ENCODE measurements at regions of chr5 and their contacts with region 1.

Region 1: DNA sequence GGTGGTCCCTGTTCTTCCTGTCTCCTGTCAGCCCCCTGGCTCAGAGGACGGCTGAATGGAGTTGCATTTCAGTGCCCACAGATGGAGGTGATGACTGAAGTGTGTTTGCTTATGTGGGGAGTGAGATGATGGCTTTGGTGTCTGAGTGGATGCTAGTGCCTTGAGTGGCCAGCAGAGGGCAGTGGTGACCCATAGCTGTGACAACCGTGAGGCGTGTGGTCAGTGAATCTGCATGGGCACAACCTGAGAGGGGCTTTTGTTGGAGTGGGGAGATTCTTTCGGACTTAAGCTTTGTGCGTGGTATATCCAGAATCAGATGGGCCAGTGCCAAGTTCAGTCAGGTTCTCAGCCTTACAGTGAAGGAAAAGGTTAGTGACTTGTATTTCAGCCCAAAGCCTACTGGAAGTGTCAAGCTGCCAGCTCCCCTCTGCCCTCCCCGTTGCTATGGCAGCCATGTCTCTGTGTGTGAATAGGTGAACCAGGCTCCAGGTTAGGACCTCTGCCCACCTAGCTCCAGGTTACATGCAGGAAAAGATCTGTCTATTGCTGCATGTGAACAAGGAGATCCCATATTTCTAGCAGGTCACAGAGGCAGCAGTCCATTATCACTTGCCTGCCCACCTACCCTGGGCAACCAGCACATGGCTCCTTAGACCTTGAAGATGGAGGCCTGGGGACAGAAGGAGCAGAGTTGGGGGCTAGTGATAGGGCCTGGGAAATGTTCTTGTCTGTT is 14.7 kb upstream of the CXXC5 start:
- DNase-seq: peak; percentile 77 to 79
- ATAC-seq: peak; percentile 70 to 80
- H3K4me3 ChIP-seq: no peak overlapping the region
- H3K27ac ChIP-seq: peak overlapping the region in 1 of 2 experiments; percentile 51; a peak in 3 of 6 replicates
- H3K4me1 ChIP-seq: peaks cover 38% of the 10 kb centered on the region
- CTCF ChIP-seq: peak; percentile 95
- EP300 ChIP-seq: no peak
- POLR2A ChIP-seq: no peak
- RAD21 ChIP-seq: peak; percentile 94 to 95

Region 2: GRCh38 chr5:139177809-139178588 is 455.5 kb before region 1 on chr5:
- CTCF ChIA-PET with region 1: no interaction called
- POLR2A ChIA-PET with region 1: no interaction called
- DNase-seq: no peak
- ATAC-seq: peak; percentile 25 to 42; a peak in 2 of 6 replicates
- H3K4me3 ChIP-seq: no peak overlapping the region
- H3K27ac ChIP-seq: no peak overlapping the region
- H3K4me1 ChIP-seq: peaks cover 24% of the 10 kb centered on the region
- CTCF ChIP-seq: no peak
- EP300 ChIP-seq: no peak
- POLR2A ChIP-seq: no peak
- RAD21 ChIP-seq: no peak

Region 3: DNA sequence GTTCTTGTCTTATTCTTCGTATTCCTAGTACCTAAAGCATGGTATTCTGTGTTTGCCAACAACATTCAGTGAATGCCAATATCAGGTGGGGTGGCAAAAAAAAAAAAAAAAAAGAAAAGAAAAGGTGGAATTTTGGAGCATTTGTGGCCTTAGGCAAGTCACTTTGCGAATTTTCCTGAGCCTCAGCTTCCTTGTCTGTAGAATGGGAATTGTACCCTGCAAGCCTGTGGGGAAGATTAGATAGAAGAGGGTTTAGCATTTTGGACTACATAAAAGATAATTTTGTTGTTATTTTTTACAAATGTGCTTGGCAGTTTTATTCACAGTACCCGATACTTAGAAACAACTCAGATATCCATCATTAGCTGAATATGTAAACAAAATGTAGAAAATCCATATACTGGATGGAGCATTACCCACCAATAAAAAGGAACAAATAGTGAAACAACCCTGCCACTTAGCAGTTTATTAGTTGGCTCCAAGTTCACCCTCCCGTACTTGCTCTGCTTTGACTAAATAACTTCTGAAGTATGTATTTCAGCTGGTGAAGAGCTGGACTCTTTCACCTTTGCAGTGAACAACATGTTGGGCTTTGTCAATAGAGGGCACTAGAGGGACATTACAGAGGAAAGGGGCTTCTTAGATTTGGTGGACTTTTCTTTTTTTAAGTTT is 58.7 kb before region 1 on chr5:
- CTCF ChIA-PET with region 1: interaction called, 26 read pairs
- POLR2A ChIA-PET with region 1: interaction called, 3 read pairs
- DNase-seq: peak; percentile 44 to 46
- ATAC-seq: peak; percentile 80 to 89; a peak in 5 of 6 replicates
- H3K4me3 ChIP-seq: no peak overlapping the region
- H3K27ac ChIP-seq: no peak overlapping the region
- H3K4me1 ChIP-seq: peaks cover 29% of the 10 kb centered on the region; the same call in 2 of the 3 replicates
- CTCF ChIP-seq: peak; percentile 74
- EP300 ChIP-seq: no peak
- POLR2A ChIP-seq: no peak
- RAD21 ChIP-seq: peak; percentile 64 to 71

Region 4: GRCh38 chr5:139619861-139620260 is 13.6 kb before region 1 on chr5:
- CTCF ChIA-PET with region 1: interaction called, 40 read pairs
- POLR2A ChIA-PET with region 1: no interaction called
- DNase-seq: no peak
- ATAC-seq: no peak
- H3K4me3 ChIP-seq: no peak overlapping the region
- H3K27ac ChIP-seq: no peak overlapping the region
- H3K4me1 ChIP-seq: no peaks in the 10 kb centered on the region
- CTCF ChIP-seq: no peak
- EP300 ChIP-seq: no peak
- POLR2A ChIP-seq: no peak
- RAD21 ChIP-seq: no peak

Region 5: DNA sequence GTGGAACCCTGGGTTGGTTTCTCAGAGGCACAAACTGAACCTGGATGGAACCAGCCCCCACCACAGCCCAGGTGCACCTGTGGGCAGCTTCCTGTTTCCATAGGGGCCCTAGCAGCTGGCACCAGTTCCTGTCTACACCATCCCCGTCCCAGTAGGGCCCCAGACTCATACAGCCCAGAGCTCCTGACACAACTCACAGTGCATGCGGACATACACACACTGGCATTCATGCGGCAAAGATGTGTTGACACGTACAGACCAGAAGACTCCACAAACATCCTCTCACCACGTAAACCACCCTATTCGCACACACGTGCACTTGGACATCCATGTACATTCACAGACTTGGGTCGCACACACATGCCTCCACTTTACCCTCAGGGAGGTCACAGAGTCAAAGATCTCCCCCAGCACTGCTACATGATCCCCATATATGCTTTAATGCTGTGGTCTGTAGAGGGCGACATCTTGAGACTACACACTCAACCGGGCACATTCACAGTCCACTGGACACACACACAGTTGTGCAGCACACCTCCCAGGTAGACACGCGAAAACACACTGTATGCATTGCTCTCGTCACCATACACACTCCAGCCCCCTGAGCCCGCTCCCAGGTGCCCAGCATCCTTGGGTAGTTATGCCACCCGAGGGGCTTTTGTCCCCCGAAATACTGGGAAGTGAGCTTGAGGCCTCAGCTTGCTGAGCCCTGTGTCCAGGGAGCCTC is 37.1 kb after region 1 on chr5:
- CTCF ChIA-PET with region 1: interaction called, 16 read pairs
- POLR2A ChIA-PET with region 1: no interaction called
- DNase-seq: peak in 1 of 2 experiments; percentile 53
- ATAC-seq: peak in 1 of 2 experiments; percentile 59; a peak in 3 of 6 replicates
- H3K4me3 ChIP-seq: no peak overlapping the region
- H3K27ac ChIP-seq: peak overlapping the region in 1 of 2 experiments; percentile 51; a peak in 1 of 6 replicates
- H3K4me1 ChIP-seq: peaks cover 42% of the 10 kb centered on the region
- CTCF ChIP-seq: peak; percentile 26; the same call in 2 of the 3 replicates
- EP300 ChIP-seq: no peak
- POLR2A ChIP-seq: no peak
- RAD21 ChIP-seq: peak in 1 of 2 experiments; percentile 24; a peak in 1 of 5 replicates

Region 6: DNA sequence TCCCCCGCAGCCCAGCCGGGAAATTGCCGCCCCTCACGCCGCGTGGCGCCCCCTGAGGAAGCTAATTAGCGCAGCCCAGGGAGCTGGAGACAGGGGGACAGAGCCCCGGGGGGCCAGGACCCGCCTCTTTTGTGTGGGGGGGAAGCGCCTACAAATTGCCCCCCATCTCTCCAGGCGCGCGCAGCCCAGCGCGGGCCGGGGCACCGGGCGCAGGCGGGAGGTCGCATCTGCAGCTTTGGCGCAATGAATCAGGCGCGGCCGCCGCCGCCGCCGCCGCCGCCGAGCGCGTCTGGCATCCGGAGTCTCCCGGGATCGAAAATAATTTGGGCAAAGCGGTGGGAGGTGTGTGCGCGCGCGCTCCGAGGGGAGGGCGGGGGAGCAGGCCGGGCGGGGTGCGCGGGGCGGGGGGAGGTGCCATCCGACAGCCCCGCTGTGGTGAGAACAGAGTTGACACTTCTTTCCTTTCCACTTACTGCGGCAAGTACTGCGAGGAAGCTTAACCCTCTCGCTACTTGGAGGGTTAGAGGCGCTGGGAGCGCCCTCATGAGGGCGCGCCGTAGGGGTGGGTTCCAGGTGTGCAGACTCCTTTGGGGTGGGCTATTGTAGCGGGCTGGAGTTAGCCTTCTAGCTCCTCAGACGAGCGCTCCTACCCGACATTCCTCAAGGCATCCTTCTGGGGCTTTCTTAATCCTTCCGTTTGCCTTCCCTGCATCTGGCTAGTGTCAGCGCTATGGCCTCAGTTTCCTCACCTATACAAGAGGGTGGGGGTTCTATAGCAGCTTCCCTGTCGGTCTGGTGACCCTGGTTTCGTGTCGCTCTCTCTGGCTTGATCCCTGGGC is 77.8 kb after region 1 on chr5:
- CTCF ChIA-PET with region 1: interaction called, 46 read pairs
- POLR2A ChIA-PET with region 1: no interaction called
- DNase-seq: peak; percentile 31 to 46
- ATAC-seq: peak; percentile 37 to 65; a peak in 5 of 6 replicates
- H3K4me3 ChIP-seq: peak overlapping the region; percentile 88
- H3K27ac ChIP-seq: peak overlapping the region; percentile 65 to 87
- H3K4me1 ChIP-seq: peaks cover 19% of the 10 kb centered on the region; the same call in 2 of the 3 replicates
- CTCF ChIP-seq: no peak
- EP300 ChIP-seq: no peak
- POLR2A ChIP-seq: no peak
- RAD21 ChIP-seq: peak; percentile 24 to 39; a peak in 2 of 5 replicates

Region 7: GRCh38 chr5:139765409-139766217 is 132.2 kb after region 1 on chr5:
- CTCF ChIA-PET with region 1: interaction called, 267 read pairs
- POLR2A ChIA-PET with region 1: no interaction called
- DNase-seq: peak; percentile 74 to 76
- ATAC-seq: peak; percentile 79 to 93
- H3K4me3 ChIP-seq: peak overlapping the region; percentile 51
- H3K27ac ChIP-seq: peak overlapping the region; percentile 80 to 92
- H3K4me1 ChIP-seq: no peaks in the 10 kb centered on the region
- CTCF ChIP-seq: peak; percentile 99
- EP300 ChIP-seq: no peak
- POLR2A ChIP-seq: no peak
- RAD21 ChIP-seq: peak; percentile 78 to 94

Measured in A549 (cell line).